ENCODE measurements at regions of chr10 and their contacts with region 1.

Region 1: GRCh38 chr10:28381903-28382347 is 79.1 kb upstream of the MPP7 start:
- DNase-seq: peak; percentile 68
- H3K4me3 Mint-ChIP-seq: no peak overlapping the region
- H3K27ac Mint-ChIP-seq: no peak overlapping the region
- H3K4me1 Mint-ChIP-seq: peaks cover 15% of the 10 kb centered on the region
- H3K27me3 Mint-ChIP-seq: peaks cover 9% of the 10 kb centered on the region

Region 2: DNA sequence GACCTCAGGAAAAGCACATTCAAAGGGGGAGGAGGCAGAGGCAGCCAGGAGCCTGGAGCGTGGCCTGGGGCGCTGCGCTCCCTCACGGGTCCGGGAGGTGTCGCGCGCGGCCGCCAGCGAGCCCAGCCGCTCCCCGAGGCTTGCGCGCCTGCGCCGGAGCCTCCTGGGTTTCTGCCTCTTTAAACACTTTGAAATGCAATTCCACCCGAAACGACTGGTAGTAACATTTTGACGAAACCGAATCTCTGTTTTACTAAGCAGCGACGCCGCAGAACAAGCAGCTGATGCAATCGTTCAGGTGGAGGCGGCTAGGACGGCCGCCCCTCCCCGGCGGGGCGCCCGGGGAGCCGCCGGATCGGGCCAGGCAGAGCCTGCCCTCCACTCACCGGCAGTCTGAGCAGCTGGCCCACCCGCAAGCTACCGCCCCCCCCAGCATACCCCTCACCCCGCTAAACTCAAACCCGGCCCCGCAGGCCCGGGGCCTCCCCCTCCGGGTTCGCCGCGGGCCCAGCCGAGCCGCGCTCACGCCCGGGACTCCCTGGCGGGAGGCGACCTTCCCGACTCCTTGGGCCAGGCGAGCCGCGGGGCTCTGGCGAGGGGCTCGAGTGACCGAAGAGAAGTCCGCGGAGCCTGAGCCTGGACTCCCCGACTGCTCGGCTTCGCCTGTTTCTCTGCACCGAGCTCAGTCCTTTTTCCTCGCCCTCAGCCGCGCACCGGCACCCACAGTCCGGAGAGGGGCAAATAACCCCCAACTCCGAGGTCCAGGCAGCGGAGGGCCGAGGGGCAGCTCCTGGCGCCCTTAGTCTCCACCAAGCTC is 639.5 kb before region 1 on chr10:
- intact Hi-C with region 1: loop called (anchors 5 kb)
- DNase-seq: peak; percentile 77
- H3K4me3 Mint-ChIP-seq: peak overlapping the region; percentile 45
- H3K27ac Mint-ChIP-seq: no peak overlapping the region
- H3K4me1 Mint-ChIP-seq: peaks cover 25% of the 10 kb centered on the region
- H3K27me3 Mint-ChIP-seq: peaks cover 65% of the 10 kb centered on the region

Region 3: DNA sequence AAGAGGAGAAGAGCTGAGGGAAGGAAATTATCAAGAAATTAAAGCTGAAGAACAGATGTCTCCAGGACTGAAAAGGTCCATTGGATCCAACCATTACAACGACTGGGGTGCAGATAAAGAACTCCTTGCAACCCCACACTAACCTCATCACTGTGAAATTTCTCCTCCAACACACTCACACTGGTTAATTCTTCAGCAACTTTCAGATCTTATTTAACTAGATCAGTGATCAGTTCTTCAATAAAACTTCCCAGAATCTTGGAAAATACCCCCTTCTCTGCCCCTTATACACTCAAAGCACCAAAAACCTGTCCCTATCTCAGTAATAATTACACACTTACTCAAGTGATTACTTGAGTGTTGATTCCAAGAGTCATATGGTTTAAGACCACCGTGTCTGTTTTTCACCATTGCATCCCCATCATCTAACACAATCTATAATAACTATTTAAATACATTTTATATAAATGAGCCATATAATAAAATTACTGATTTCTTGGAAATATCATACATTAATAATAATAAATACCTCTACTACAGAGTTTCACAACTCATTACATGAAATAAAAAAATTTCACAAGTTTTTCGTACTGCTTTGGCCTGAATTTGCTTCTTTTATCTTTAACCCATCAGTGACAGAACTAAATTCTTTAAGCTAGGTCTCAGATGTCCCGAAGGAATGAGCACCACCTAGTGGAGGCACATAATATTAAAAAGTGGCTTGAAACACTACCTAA is 202.8 kb before region 1 on chr10:
- intact Hi-C with region 1: loop called (anchors 10 kb)
- DNase-seq: peak; percentile 18
- H3K4me3 Mint-ChIP-seq: no peak overlapping the region
- H3K27ac Mint-ChIP-seq: peak overlapping the region; percentile 87
- H3K4me1 Mint-ChIP-seq: peaks cover 20% of the 10 kb centered on the region
- H3K27me3 Mint-ChIP-seq: peaks cover 6% of the 10 kb centered on the region

Region 4: DNA sequence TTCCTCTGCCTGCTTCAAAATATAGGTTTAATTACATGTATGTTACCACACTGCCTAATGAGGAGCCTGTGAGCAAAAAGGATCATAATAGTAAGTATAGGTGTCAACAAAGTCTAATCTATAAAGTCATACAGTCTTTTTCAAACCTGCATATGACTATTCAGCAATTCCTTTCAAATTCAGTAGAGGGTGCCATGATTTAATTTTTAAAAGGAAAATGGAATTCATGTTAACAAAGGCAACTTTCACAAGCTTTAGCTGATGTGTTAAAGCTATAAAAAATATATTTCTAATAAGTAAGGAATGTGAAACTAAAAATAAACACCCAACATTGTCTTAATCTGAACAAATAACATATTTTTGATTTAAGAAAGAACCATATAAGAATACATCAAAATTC is 131.1 kb before region 1 on chr10:
- intact Hi-C with region 1: loop called (anchors 1 kb)
- DNase-seq: no peak
- H3K4me3 Mint-ChIP-seq: no peak overlapping the region
- H3K27ac Mint-ChIP-seq: no peak overlapping the region
- H3K4me1 Mint-ChIP-seq: peaks cover 7% of the 10 kb centered on the region
- H3K27me3 Mint-ChIP-seq: peaks cover 5% of the 10 kb centered on the region

Region 5: GRCh38 chr10:28302638-28303488 is 79.1 kb before region 1 on chr10 and contains the start of gene MPP7:
- intact Hi-C with region 1: loop called (anchors 1 kb)
- DNase-seq: peak; percentile 94
- H3K4me3 Mint-ChIP-seq: peak within 1 kb of the TSS; percentile 88
- H3K27ac Mint-ChIP-seq: no peak within 1 kb of the TSS
- H3K4me1 Mint-ChIP-seq: peaks cover 33% of the 10 kb centered on the region
- H3K27me3 Mint-ChIP-seq: peaks cover 42% of the 10 kb centered on the region
- total RNA-seq, gene MPP7: 0.60 and 0.73 TPM in 2 replicates

Region 6: DNA sequence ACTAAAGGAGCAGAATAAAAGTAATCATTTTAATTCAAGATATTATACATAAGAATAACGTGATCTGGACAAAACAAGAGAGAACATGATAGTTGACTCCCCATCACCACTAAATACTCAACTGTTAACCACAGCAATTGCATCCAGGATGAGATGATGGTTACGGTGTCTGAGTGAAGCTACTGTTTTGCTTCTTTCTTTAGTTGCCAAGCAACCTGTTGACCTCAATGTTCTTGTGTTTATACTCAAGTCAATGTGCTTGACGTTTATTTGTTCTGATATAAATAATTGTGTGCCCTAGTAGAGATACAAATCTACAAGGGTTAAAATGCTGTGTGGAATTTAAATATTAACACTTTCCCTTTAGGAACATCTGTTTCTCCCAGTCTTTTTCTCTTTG is 47.6 kb before region 1 on chr10:
- intact Hi-C with region 1: loop called (anchors 1 kb)
- DNase-seq: peak; percentile 58
- H3K4me3 Mint-ChIP-seq: peak overlapping the region; percentile 79
- H3K27ac Mint-ChIP-seq: peak overlapping the region; percentile 98
- H3K4me1 Mint-ChIP-seq: peaks cover 49% of the 10 kb centered on the region
- H3K27me3 Mint-ChIP-seq: peaks cover 2% of the 10 kb centered on the region

Region 7: DNA sequence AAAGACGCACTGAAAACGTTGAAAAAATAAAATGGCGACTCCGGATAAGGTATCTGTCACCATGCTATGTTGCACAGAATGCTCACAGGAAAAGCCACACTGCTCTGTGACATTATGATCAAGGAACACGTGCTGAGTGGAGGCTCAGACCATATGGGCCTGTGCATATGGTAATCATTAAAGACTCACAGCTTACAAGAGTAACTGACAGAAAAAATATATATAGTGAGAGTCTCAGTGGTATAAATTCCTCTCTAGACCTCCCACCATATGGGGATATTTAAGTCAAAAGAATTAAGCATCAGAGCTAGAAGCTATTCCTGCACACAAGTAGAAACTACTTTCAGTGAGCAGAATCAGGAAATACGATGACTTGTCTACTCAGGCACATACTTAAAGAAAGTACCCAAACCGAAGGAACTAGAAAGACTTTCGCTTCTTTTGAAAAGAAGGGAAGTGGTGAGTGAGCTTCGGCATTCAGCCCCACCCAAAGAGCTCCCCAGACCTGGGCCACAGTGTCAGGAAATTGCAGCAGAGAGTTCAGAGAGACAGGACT is 13.9 kb before region 1 on chr10:
- intact Hi-C with region 1: loop called (anchors 1 kb)
- DNase-seq: peak; percentile 60
- H3K4me3 Mint-ChIP-seq: peak overlapping the region; percentile 37
- H3K27ac Mint-ChIP-seq: peak overlapping the region; percentile 83
- H3K4me1 Mint-ChIP-seq: peaks cover 24% of the 10 kb centered on the region
- H3K27me3 Mint-ChIP-seq: no peaks in the 10 kb centered on the region